ENCODE measurements at regions of chr7 and their contacts with region 1.

Region 1: GRCh38 chr7:100673300-100673941 is at the start of gene GNB2:
- DNase-seq: peak; percentile 99 to 100 (median 99)
- ATAC-seq: peak; percentile 89 to 96 (median 92)
- H3K4me3 ChIP-seq: peak within 1 kb of the TSS; percentile 79 to 100 (median 96)
- H3K27ac ChIP-seq: peak within 1 kb of the TSS; percentile 88 to 100 (median 98)
- H3K4me1 ChIP-seq: peaks cover 0 to 35% (median 12%) of the 10 kb centered on the region in 12 donors
- H3K27me3 ChIP-seq: no peaks in the 10 kb centered on the region
- CTCF ChIP-seq: no peak
- POLR2A ChIP-seq: peak; percentile 34 to 77
- total RNA-seq, gene GNB2: 94.8 to 188 (median 122) TPM

Region 2: GRCh38 chr7:100469227-100470044 is 204.0 kb before region 1 on chr7:
- intact Hi-C with region 1: loop called in 1 of 10 experiments (anchors 5 kb)
- DNase-seq: peak; percentile 85 to 93 (median 88)
- ATAC-seq: peak; percentile 59 to 75 (median 70)
- H3K4me3 ChIP-seq: no peak overlapping the region
- H3K27ac ChIP-seq: peak overlapping the region in 10 of 12 donors; percentile 8 to 83 (median 64)
- H3K4me1 ChIP-seq: peaks cover 3 to 81% (median 48%) of the 10 kb centered on the region in 12 donors
- H3K27me3 ChIP-seq: no peaks in the 10 kb centered on the region
- CTCF ChIP-seq: peak; percentile 82 to 98 (median 94)
- POLR2A ChIP-seq: peak in 1 of 2 donors; percentile 18

Region 3: DNA sequence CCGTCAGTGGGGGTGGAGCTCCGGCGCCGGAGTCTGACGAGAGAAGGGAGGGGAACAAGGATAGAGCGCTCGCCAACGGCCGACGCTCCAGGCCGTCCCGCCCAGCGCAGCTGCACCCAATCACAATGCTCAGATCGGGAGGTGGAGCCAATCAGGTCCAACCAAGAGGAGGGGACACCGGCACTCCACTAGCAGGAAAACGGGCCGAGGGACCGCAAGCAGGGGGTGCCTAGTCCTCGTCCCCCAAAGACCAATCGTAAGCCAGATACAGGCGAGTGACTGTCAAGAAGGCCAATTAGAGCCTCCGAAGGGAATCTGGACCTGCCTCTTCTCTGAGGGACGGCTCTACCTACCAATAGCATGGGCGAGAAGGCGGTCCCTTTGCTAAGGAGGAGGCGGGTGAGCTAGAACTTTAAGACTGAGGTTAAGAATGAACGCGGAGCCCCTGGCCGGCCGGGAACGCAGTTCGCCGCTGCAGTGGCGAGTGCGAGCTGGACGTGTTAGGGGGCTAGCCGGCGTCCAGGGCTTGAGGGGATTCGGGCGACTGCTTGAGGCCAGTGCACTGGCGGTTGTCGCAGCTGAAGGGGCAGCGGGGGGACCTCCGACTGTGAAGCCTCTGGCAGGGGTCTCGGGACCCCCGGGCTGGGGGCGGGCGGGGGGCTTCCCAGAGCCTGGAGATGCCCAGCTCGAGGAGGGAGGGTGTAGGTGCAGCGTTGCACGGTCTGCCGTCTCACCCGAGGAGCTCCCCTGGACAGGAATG is 87.0 kb before region 1 on chr7 and contains the start of gene FBXO24:
- intact Hi-C with region 1: loop called in 5 of 10 experiments (anchors 1 to 10 kb)
- DNase-seq: peak; percentile 100
- ATAC-seq: peak; percentile 91 to 97 (median 96)
- H3K4me3 ChIP-seq: peak within 1 kb of the TSS; percentile 75 to 100 (median 96)
- H3K27ac ChIP-seq: peak within 1 kb of the TSS; percentile 79 to 99 (median 96)
- H3K4me1 ChIP-seq: peaks cover 6 to 63% (median 41%) of the 10 kb centered on the region in 12 donors
- H3K27me3 ChIP-seq: no peaks in the 10 kb centered on the region
- CTCF ChIP-seq: no peak
- POLR2A ChIP-seq: peak in 1 of 2 donors; percentile 48
- total RNA-seq, gene FBXO24: 0.11 to 0.75 (median 0.48) TPM in 6 of 9 donors, not detected in the others

Region 4: GRCh38 chr7:100611974-100612729 is 61.3 kb before region 1 on chr7 and contains the start of gene MOSPD3:
- intact Hi-C with region 1: loop called in 6 of 10 experiments (anchors 1 to 10 kb)
- DNase-seq: peak; percentile 98 to 99 (median 98)
- ATAC-seq: peak; percentile 96 to 98 (median 98)
- H3K4me3 ChIP-seq: peak within 1 kb of the TSS; percentile 54 to 90 (median 76)
- H3K27ac ChIP-seq: peak within 1 kb of the TSS; percentile 75 to 98 (median 94)
- H3K4me1 ChIP-seq: peaks cover 0 to 24% (median 12%) of the 10 kb centered on the region in 12 donors
- H3K27me3 ChIP-seq: no peaks in the 10 kb centered on the region
- CTCF ChIP-seq: no peak
- POLR2A ChIP-seq: peak; percentile 53 to 58
- total RNA-seq, gene MOSPD3: 6.7 to 13.8 (median 10.4) TPM

Region 5: GRCh38 chr7:100655908-100656674 is 17.3 kb before region 1 on chr7 and contains the start of gene ACTL6B:
- intact Hi-C with region 1: loop called in 1 of 10 experiments (anchors 1 kb)
- DNase-seq: peak; percentile 57 to 83 (median 72)
- ATAC-seq: peak in 3 of 4 donors; percentile 80 to 84 (median 83)
- H3K4me3 ChIP-seq: no peak within 1 kb of the TSS
- H3K27ac ChIP-seq: no peak within 1 kb of the TSS
- H3K4me1 ChIP-seq: peaks cover 0 to 7% (median 0%) of the 10 kb centered on the region in 12 donors
- H3K27me3 ChIP-seq: peaks cover 16 to 84% (median 37%) of the 10 kb centered on the region in 9 donors
- CTCF ChIP-seq: no peak
- POLR2A ChIP-seq: no peak
- total RNA-seq, gene ACTL6B: not detected

Region 6: DNA sequence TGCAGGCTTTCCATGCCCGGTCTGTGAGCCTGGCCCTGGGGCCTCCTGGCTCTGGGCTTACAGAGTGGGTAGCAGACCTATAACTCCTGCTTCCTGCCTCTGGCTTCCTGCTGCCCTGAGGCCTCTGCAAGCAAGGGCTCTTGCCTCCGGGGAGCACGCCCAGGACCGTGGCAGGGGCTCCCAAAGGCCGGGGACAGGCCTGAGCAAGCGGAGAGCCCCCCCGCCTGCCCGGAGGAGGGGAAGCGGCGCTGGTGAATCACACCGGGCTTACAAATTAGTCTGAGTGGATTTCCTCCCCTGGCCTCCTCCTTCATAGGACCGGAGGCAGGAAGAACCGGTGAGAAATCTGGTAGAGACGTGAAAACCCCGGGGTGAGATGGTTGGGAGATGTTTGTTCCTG is 957.2 kb after region 1 on chr7:
- intact Hi-C with region 1: no loop called
- DNase-seq: no peak
- ATAC-seq: no peak
- H3K4me3 ChIP-seq: no peak overlapping the region
- H3K27ac ChIP-seq: no peak overlapping the region
- H3K4me1 ChIP-seq: peaks cover 0 to 10% (median 0%) of the 10 kb centered on the region in 12 donors
- H3K27me3 ChIP-seq: peaks cover 0 to 12% (median 7%) of the 10 kb centered on the region in 9 donors
- CTCF ChIP-seq: no peak
- POLR2A ChIP-seq: no peak